ENCODE measurements at regions of chr7 and their contacts with region 1.

Region 1: DNA sequence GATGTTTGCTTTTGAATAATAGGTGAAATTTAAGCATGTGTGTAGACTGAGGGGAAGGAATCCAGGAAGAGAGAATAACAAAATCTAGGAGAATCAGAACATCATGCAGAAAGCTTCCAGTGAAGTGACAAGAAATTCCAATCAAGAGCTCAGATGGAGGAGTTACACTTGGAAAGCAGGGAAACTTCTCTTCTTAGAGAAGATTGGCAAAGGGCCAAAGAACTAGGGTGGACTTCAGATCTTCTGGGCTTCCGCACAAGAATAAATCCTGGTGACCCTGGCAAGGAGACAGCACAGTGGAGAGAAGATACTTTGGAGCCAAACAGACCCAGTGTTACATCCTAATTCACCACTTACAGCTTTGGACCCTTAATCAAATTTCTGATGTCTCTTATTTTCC is 32.6 kb upstream of the TMEM243 start:
- DNase-seq: no peak
- H3K4me3 ChIP-seq: no peak overlapping the region
- H3K27ac ChIP-seq: no peak overlapping the region
- H3K4me1 ChIP-seq: no peaks in the 10 kb centered on the region
- CTCF ChIP-seq: no peak

Region 2: GRCh38 chr7:87199700-87200450 is 52.3 kb before region 1 on chr7:
- CTCF ChIA-PET with region 1: no interaction called
- POLR2A ChIA-PET with region 1: no interaction called
- intact Hi-C with region 1: no loop called
- DNase-seq: no peak
- H3K4me3 ChIP-seq: no peak overlapping the region
- H3K27ac ChIP-seq: no peak overlapping the region
- H3K4me1 ChIP-seq: no peaks in the 10 kb centered on the region
- CTCF ChIP-seq: no peak

Region 3: DNA sequence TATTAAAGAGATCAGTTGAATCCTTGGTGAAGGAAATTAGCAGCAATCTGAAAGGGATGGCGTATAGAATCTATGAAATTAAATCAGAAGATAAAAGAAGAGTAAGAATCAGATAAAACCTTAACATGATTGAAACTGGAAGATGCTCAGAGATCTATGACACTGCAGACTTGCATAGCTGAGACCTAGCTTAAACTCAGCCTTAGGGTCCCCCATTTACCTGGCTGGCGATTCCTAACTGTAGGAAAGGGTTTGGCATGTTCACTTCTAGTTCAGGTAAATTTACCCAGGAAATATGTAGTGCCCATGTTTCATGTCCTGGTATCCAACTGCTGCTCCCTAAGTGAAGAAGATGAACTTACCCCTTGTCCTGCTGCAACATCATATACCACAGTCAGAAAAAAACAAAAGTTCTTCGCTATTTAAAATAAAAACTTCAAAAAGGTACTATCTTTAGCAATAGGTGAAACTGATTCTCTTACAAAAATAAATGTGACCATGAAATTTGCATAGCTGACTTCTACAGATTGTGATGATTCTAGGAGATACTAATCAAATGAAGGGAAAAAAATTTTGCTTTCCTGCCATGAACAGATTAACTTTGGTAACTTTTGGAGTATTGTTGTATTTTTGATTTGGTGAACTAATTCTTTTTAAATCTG is 15.2 kb after region 1 on chr7:
- CTCF ChIA-PET with region 1: no interaction called
- POLR2A ChIA-PET with region 1: interaction called, 3 read pairs
- intact Hi-C with region 1: loop called (anchors 1 kb)
- DNase-seq: no peak
- H3K4me3 ChIP-seq: no peak overlapping the region
- H3K27ac ChIP-seq: no peak overlapping the region
- H3K4me1 ChIP-seq: peaks cover 8% of the 10 kb centered on the region
- CTCF ChIP-seq: no peak

Region 4: DNA sequence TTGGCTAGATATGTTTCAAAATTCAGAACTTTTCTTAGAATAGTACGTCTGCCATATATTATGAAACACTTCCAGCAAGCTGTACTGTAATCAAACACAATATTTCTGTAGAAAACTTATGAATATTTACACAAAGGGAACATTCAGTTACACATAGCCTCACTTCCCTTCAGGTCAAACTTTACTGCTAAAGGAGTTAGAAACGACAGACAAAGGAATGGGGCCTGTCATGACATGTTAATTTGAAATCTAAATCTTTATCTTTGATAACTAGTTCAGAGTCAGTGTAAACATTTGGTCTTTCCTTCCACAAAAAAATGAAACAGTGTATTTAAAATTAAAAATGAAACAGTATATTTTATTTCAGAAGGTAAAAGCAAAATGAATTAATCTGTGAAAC is 92.3 kb after region 1 on chr7:
- CTCF ChIA-PET with region 1: no interaction called
- POLR2A ChIA-PET with region 1: no interaction called
- intact Hi-C with region 1: no loop called
- DNase-seq: peak; percentile 20
- H3K4me3 ChIP-seq: peak overlapping the region; percentile 74
- H3K27ac ChIP-seq: peak overlapping the region; percentile 57
- H3K4me1 ChIP-seq: peaks cover 30% of the 10 kb centered on the region
- CTCF ChIP-seq: no peak

Measured in OCI-LY7 (cell line).